ENCODE measurements at regions of chr1 and their contacts with region 1.

Region 1: DNA sequence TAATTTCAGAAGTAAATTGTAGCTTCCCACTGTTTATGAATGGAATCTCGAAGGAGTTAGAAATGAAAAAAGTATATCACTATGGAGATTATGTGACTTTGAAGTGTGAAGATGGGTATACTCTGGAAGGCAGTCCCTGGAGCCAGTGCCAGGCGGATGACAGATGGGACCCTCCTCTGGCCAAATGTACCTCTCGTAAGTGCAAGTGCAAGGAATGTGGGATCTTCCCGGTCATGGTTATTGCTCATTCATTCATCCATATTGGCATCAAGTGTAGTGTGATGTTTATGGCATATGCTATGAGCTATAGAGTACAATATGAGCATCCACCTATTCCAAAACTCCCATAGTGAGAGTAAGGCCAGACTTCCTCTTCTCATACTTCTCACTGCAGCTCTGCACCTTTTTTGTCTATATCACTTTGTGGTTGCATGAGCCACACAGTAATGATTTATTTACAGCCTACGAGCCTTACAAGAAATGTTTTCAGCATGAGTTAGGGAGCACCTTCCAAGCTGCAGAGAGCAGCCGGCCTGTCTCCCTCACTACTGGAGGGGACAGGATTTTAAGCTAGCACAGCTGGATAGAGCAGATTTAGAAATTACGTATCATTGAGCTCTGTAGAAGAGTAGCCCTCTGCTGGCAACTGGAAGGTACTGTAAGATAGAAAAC is 24.9 kb upstream of the CR1L start:
- DNase-seq: no peak
- H3K4me3 Mint-ChIP-seq: no peak overlapping the region
- H3K27ac Mint-ChIP-seq: no peak overlapping the region
- H3K4me1 Mint-ChIP-seq: no peaks in the 10 kb centered on the region
- H3K27me3 Mint-ChIP-seq: peaks cover 20% of the 10 kb centered on the region

Region 2: GRCh38 chr1:207698822-207699483 is 78.9 kb after region 1 on chr1:
- intact Hi-C with region 1: loop called (anchors 2 kb)
- DNase-seq: no peak
- H3K4me3 Mint-ChIP-seq: no peak overlapping the region
- H3K27ac Mint-ChIP-seq: no peak overlapping the region
- H3K4me1 Mint-ChIP-seq: no peaks in the 10 kb centered on the region
- H3K27me3 Mint-ChIP-seq: peaks cover 10% of the 10 kb centered on the region

Region 3: GRCh38 chr1:207779008-207779407 is 159.0 kb after region 1 on chr1:
- intact Hi-C with region 1: no loop called
- DNase-seq: no peak
- H3K4me3 Mint-ChIP-seq: no peak overlapping the region
- H3K27ac Mint-ChIP-seq: no peak overlapping the region
- H3K4me1 Mint-ChIP-seq: peaks cover 9% of the 10 kb centered on the region
- H3K27me3 Mint-ChIP-seq: no peaks in the 10 kb centered on the region

Measured in activated T-helper 1 cell treated with anti-CD3 and anti-CD28 coated beads, Interleukin-12 subunit alpha, Interleukin-12 subunit beta, Interleukin-2, Interleukin-4 antibody, amounts not matched to agents 30 ng/mL and 10 ng/mL and 1 ng/mL, durations not matched to agents 14 hours and 24 hours and 36 hours (primary cell).